ENCODE measurements at regions of chr10 and their contacts with region 1.

Region 1: GRCh38 chr10:110285501-110285900 is 19.2 kb downstream of the SMNDC1 start:
- DNase-seq: no peak
- H3K4me3 ChIP-seq: no peak overlapping the region
- H3K4me3 Mint-ChIP-seq: no peak overlapping the region
- H3K27ac ChIP-seq: no peak overlapping the region
- H3K27ac Mint-ChIP-seq: no peak overlapping the region
- H3K4me1 ChIP-seq: no peaks in the 10 kb centered on the region
- H3K4me1 Mint-ChIP-seq: no peaks in the 10 kb centered on the region
- H3K27me3 ChIP-seq: no peaks in the 10 kb centered on the region
- H3K27me3 Mint-ChIP-seq: no peaks in the 10 kb centered on the region
- CTCF ChIP-seq: no peak

Region 2: GRCh38 chr10:109902934-109903589 is 382.4 kb before region 1 on chr10:
- intact Hi-C with region 1: loop called in 1 of 2 experiments (anchors 10 kb)
- DNase-seq: peak in 1 of 3 donors; percentile 20
- H3K4me3 ChIP-seq: no peak overlapping the region
- H3K4me3 Mint-ChIP-seq: no peak overlapping the region
- H3K27ac ChIP-seq: peak overlapping the region in 1 of 2 donors; percentile 69
- H3K27ac Mint-ChIP-seq: peak overlapping the region in 6 of 7 donors; percentile 26 to 84 (median 64)
- H3K4me1 ChIP-seq: peaks cover 17 to 33% of the 10 kb centered on the region in 2 donors
- H3K4me1 Mint-ChIP-seq: peaks cover 56% of the 10 kb centered on the region
- H3K27me3 ChIP-seq: no peaks in the 10 kb centered on the region
- H3K27me3 Mint-ChIP-seq: no peaks in the 10 kb centered on the region
- CTCF ChIP-seq: no peak

Region 3: DNA sequence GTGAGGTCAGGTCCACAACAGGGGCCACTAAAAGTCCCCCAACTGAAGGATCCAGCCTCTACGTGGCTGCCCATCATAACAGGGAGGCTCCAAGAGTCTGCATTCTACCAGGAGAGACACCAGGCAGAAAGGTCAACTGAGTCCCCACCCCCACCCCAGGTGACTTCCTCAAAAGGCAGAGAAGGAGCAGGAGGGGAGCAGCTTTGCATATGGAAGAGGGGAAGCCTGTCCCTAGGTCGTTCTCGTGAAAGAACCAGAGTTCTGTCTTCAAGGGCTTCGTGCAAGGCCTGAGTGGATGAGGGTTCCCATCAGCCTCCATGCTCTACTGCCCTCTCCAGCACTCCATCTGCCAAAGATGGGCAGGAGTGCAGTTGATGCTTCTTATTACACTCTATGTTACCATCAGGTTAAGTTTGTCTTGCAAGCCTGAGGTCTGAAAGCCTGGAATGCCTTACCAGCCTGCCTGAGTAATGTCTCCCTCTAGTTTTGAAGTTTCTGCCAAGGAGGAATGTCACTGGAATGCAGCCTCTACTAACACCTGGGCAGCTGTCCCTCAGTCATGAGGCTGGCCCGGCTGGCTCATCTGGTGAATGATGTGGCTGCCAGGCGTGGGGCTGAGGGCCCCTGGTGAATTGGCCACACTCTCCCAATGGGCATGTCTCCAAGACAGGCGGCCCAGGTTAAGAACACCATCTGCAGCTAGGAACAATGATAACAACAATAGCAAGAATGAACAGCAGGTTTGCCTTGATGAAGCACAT is 73.5 kb after region 1 on chr10:
- intact Hi-C with region 1: no loop called
- DNase-seq: no peak
- H3K4me3 ChIP-seq: no peak overlapping the region
- H3K4me3 Mint-ChIP-seq: no peak overlapping the region
- H3K27ac ChIP-seq: no peak overlapping the region
- H3K27ac Mint-ChIP-seq: no peak overlapping the region
- H3K4me1 ChIP-seq: no peaks in the 10 kb centered on the region
- H3K4me1 Mint-ChIP-seq: peaks cover 5% of the 10 kb centered on the region
- H3K27me3 ChIP-seq: no peaks in the 10 kb centered on the region
- H3K27me3 Mint-ChIP-seq: peaks cover 3 to 7% (median 4%) of the 10 kb centered on the region in 3 donors
- CTCF ChIP-seq: no peak